Activated naive CD4-positive, alpha-beta T cell treated with anti-CD3 and anti-CD28 coated beads, Interleukin-2, amount 10 ng/mL, durations not matched to agents 7 days and 5 days (primary cell): ENCODE measurements at regions of chr16 and their contacts with region 1.

Region 1: DNA sequence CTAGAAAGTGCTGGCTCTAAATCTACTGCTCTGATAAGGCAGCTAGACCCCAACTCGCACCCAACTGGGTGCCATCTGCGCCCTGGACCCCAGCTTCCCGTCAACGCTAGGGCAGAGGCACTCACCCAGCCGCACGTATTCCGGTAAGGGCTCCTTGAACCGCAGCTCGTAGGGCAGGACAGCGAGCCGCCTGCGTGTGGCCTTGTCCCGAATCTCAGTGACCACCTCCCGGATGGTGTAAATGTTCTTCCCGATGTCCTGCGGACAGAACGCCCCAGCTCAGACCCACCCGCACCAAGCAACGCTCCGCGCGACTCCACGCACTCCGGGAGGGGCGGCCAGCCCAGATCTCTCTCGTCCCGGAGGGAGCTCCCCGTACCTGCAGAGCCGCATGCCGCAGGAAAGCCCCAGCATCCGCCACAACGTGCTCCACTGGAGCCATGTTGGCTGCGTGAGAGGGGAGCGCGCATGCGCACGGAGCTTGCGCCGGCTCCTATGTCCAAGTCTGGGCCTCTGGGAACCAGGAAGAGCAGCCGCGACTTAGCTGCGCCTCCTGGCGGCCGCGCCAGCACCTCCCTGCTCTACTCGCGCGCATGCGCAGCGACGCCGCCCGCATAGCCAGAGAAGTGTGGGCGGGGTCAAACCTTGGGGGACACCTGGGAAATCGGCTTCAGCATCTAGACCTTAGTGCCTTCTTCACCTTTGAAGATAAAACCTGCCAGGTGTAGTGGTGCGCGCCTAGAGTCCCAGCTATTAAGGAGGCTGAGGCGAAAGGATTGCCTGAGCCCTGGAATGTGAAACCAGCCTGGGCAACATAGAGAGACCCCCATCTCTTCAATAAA is at the start of gene NOB1:
- DNase-seq: peak; percentile 98
- H3K4me3 Mint-ChIP-seq: peak within 1 kb of the TSS; percentile 100
- H3K27ac Mint-ChIP-seq: peak within 1 kb of the TSS; percentile 96
- H3K4me1 Mint-ChIP-seq: peaks cover 35% of the 10 kb centered on the region
- H3K27me3 Mint-ChIP-seq: peaks cover 7% of the 10 kb centered on the region

Region 2: GRCh38 chr16:69396187-69397061 is 358.3 kb before region 1 on chr16:
- CTCF ChIA-PET with region 1: interaction called, 31 read pairs
- DNase-seq: peak; percentile 78
- H3K4me3 Mint-ChIP-seq: no peak overlapping the region
- H3K27ac Mint-ChIP-seq: no peak overlapping the region
- H3K4me1 Mint-ChIP-seq: peaks cover 7% of the 10 kb centered on the region
- H3K27me3 Mint-ChIP-seq: peaks cover 34% of the 10 kb centered on the region

Region 3: GRCh38 chr16:69709456-69710084 is 45.1 kb before region 1 on chr16:
- CTCF ChIA-PET with region 1: interaction called, 48 read pairs
- DNase-seq: no peak
- H3K4me3 Mint-ChIP-seq: no peak overlapping the region
- H3K27ac Mint-ChIP-seq: no peak overlapping the region
- H3K4me1 Mint-ChIP-seq: peaks cover 4% of the 10 kb centered on the region
- H3K27me3 Mint-ChIP-seq: no peaks in the 10 kb centered on the region

Region 4: GRCh38 chr16:69726296-69727060 is 28.2 kb before region 1 on chr16 and contains the start of gene NQO1:
- CTCF ChIA-PET with region 1: interaction called, 20 read pairs
- DNase-seq: peak; percentile 96
- H3K4me3 Mint-ChIP-seq: peak within 1 kb of the TSS; percentile 95
- H3K27ac Mint-ChIP-seq: peak within 1 kb of the TSS; percentile 98
- H3K4me1 Mint-ChIP-seq: peaks cover 64% of the 10 kb centered on the region
- H3K27me3 Mint-ChIP-seq: no peaks in the 10 kb centered on the region